Activated naive CD4-positive, alpha-beta T cell treated with anti-CD3 and anti-CD28 coated beads, Interleukin-2, amount 10 ng/mL, durations not matched to agents 7 days and 5 days (primary cell): ENCODE measurements at regions of chr16 and their contacts with region 1.

Region 1: DNA sequence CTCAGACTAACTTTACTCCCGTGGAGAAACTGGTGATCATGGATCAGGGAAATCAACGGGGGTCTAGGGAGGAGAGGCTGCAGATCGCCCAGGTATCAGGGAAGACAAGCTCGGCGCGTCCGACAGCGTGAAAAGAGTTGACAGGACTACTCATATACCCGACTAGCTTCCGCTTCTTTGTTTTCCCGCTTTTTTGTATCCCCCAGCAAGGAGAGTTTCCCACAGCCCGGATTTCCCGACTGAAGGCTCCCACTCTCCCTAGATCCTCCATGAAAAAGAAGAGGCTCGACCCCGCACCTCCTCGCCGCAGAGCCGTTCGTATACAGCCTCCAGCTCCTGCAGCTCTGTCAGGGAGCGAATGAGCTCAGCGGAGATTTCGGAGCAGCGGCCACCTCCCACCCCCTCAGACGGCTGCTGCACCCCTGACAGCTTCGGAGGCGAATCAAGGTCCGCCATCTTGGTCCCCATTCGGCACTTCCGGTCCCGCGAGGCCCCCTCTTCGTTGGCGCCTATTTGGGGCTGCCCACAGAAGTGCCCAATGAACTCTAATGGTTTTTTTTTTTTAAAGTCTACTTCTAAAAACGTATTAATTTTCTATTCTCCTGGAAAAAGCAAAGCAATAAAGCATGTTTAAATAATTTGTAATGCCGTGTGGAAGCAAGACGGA is at the start of gene COG4:
- DNase-seq: peak; percentile 95
- H3K4me3 Mint-ChIP-seq: peak within 1 kb of the TSS; percentile 99
- H3K27ac Mint-ChIP-seq: peak within 1 kb of the TSS; percentile 99
- H3K4me1 Mint-ChIP-seq: peaks cover 55% of the 10 kb centered on the region
- H3K27me3 Mint-ChIP-seq: no peaks in the 10 kb centered on the region

Region 2: GRCh38 chr16:70508752-70509151 is 14.5 kb before region 1 on chr16:
- CTCF ChIA-PET with region 1: interaction called, 10 read pairs
- DNase-seq: no peak
- H3K4me3 Mint-ChIP-seq: no peak overlapping the region
- H3K27ac Mint-ChIP-seq: peak overlapping the region; percentile 74
- H3K4me1 Mint-ChIP-seq: peaks cover 12% of the 10 kb centered on the region
- H3K27me3 Mint-ChIP-seq: no peaks in the 10 kb centered on the region